HEK293 (cell line): ENCODE measurements at regions of chr10 and their contacts with region 1.

Region 1: GRCh38 chr10:77004917-77005564 is 632.6 kb downstream of the KCNMA1 start:
- H3K4me3 ChIP-seq: no peak overlapping the region
- H3K27ac ChIP-seq: no peak overlapping the region
- H3K4me1 ChIP-seq: no peaks in the 10 kb centered on the region
- CTCF ChIP-seq: peak; percentile 43; the same call in 1 of the 2 replicates

Region 2: GRCh38 chr10:76990561-76990960 is 14.5 kb before region 1 on chr10:
- CTCF ChIA-PET with region 1: interaction called, 11 read pairs
- POLR2A ChIA-PET with region 1: no interaction called
- H3K4me3 ChIP-seq: no peak overlapping the region
- H3K27ac ChIP-seq: no peak overlapping the region
- H3K4me1 ChIP-seq: no peaks in the 10 kb centered on the region
- CTCF ChIP-seq: no peak

Region 3: DNA sequence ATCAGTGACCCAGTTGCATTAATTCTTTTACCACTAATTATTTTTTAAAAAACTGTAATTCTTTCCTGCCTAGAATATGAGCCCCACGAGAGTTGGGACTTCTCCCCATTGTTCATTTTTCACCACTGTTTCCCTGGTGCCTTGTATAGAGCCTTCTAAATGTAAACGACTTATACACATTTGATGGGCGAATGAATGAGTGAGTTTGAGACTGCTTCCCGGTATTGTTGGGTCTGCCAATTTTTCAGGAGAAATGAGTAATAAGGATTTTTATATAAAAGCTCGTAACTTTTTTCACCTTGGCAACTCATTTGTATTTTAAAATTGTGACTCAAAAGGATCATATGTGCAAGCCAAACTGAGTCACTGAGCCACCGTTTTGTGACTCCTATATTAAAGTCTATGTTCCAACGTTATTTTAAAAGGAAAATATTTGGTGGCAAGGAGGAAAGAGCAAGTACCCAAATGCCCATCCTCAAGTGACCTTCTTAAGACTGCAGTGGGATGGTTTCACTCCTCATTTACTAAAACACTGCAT is 11.3 kb after region 1 on chr10:
- CTCF ChIA-PET with region 1: interaction called, 13 read pairs
- POLR2A ChIA-PET with region 1: no interaction called
- H3K4me3 ChIP-seq: no peak overlapping the region
- H3K27ac ChIP-seq: no peak overlapping the region
- H3K4me1 ChIP-seq: no peaks in the 10 kb centered on the region
- CTCF ChIP-seq: no peak